Activated B cell treated with CpG ODN at 0.5 μM for 24 hours (primary cell): ENCODE measurements at regions of chr17 and their contacts with region 1.

Region 1: GRCh38 chr17:75345514-75346167 is 56.4 kb upstream of the SLC25A19 start:
- DNase-seq: peak; percentile 63
- ATAC-seq: peak; percentile 83
- H3K4me3 Mint-ChIP-seq: peak overlapping the region; percentile 89
- H3K27ac Mint-ChIP-seq: peak overlapping the region; percentile 92
- H3K4me1 Mint-ChIP-seq: peaks cover 97% of the 10 kb centered on the region
- H3K27me3 Mint-ChIP-seq: no peaks in the 10 kb centered on the region
- CTCF ChIP-seq: no peak

Region 2: GRCh38 chr17:75313941-75314551 is 31.6 kb before region 1 on chr17:
- CTCF ChIA-PET with region 1: no interaction called
- POLR2A ChIA-PET with region 1: interaction called, 96 read pairs
- intact Hi-C with region 1: no loop called
- DNase-seq: no peak
- ATAC-seq: peak; percentile 42
- H3K4me3 Mint-ChIP-seq: no peak overlapping the region
- H3K27ac Mint-ChIP-seq: peak overlapping the region; percentile 89
- H3K4me1 Mint-ChIP-seq: peaks cover 77% of the 10 kb centered on the region
- H3K27me3 Mint-ChIP-seq: no peaks in the 10 kb centered on the region
- CTCF ChIP-seq: no peak

Region 3: GRCh38 chr17:75325827-75326225 is 19.8 kb before region 1 on chr17:
- CTCF ChIA-PET with region 1: interaction called, 20 read pairs
- POLR2A ChIA-PET with region 1: interaction called, 96 read pairs
- intact Hi-C with region 1: loop called (anchors 1 kb)
- DNase-seq: no peak
- ATAC-seq: no peak
- H3K4me3 Mint-ChIP-seq: peak overlapping the region; percentile 57
- H3K27ac Mint-ChIP-seq: peak overlapping the region; percentile 88
- H3K4me1 Mint-ChIP-seq: peaks cover 82% of the 10 kb centered on the region
- H3K27me3 Mint-ChIP-seq: no peaks in the 10 kb centered on the region
- CTCF ChIP-seq: no peak

Region 4: GRCh38 chr17:75371339-75371738 is 25.7 kb after region 1 on chr17:
- CTCF ChIA-PET with region 1: interaction called, 4 read pairs
- POLR2A ChIA-PET with region 1: interaction called, 11 read pairs
- intact Hi-C with region 1: loop called (anchors 2 kb)
- DNase-seq: no peak
- ATAC-seq: peak; percentile 65
- H3K4me3 Mint-ChIP-seq: peak overlapping the region; percentile 52
- H3K27ac Mint-ChIP-seq: peak overlapping the region; percentile 38
- H3K4me1 Mint-ChIP-seq: peaks cover 84% of the 10 kb centered on the region
- H3K27me3 Mint-ChIP-seq: no peaks in the 10 kb centered on the region
- CTCF ChIP-seq: no peak

Region 5: DNA sequence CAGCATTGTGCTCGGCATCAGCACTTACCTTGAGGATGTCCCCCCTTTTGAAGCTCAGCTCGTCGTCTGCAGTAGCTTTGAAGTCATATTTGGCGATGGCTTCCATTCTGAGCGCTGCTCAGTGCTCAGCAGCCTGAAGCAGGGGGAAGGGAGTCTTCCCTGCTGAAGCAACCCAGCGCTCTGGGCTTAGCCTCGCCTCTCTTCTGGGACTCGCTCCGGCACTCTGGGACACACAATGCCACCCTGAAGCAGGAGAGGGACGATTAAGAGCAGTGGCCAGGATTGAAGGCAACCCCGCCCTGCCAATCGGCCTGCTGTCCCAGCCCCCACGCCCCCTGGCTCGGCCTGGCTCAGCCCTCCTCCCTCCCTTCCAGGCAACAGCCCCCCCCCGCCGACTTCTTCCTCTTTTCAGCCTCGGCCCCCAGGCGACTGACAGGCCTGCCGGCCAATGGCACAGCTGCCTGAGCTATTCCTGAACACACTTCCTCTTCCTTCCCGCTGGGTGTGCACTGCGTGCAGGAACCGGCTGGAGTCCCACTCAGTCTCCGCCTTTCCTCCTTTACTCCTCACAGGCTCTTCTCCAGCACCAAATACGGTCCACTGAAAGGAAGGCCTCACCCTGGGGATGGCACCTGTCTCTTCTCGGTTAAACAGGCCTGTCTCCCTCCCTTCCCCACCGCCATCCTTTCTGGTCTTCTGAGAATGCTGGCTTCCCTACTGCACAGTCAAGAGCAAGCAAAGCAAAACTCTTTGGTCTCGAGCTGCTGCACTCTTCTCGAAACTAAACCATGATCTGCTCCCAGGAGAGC is 48.1 kb after region 1 on chr17:
- CTCF ChIA-PET with region 1: interaction called, 4 read pairs
- POLR2A ChIA-PET with region 1: interaction called, 39 read pairs
- intact Hi-C with region 1: loop called (anchors 5 kb)
- DNase-seq: peak; percentile 84
- ATAC-seq: peak; percentile 96
- H3K4me3 Mint-ChIP-seq: peak overlapping the region; percentile 92
- H3K27ac Mint-ChIP-seq: peak overlapping the region; percentile 88
- H3K4me1 Mint-ChIP-seq: peaks cover 84% of the 10 kb centered on the region
- H3K27me3 Mint-ChIP-seq: no peaks in the 10 kb centered on the region
- CTCF ChIP-seq: no peak